ENCODE measurements at regions of chr9 and their contacts with region 1.

Region 1: GRCh38 chr9:34559624-34560452 is 29.7 kb downstream of the CNTFR start:
- DNase-seq: no peak
- H3K4me3 ChIP-seq: no peak overlapping the region
- H3K27ac ChIP-seq: no peak overlapping the region
- H3K4me1 ChIP-seq: peaks cover 7 to 24% (median 16%) of the 10 kb centered on the region in 4 experiments
- H3K27me3 ChIP-seq: no peaks in the 10 kb centered on the region; a peak in 3 of 7 replicates
- CTCF ChIP-seq: no peak
- EP300 ChIP-seq: no peak
- POLR2A ChIP-seq: no peak
- RAD21 ChIP-seq: no peak

Region 2: GRCh38 chr9:34417734-34418133 is 142.1 kb before region 1 on chr9:
- CTCF ChIA-PET with region 1: no interaction called
- POLR2A ChIA-PET with region 1: no interaction called
- DNase-seq: no peak
- H3K4me3 ChIP-seq: no peak overlapping the region
- H3K27ac ChIP-seq: no peak overlapping the region
- H3K4me1 ChIP-seq: no peaks in the 10 kb centered on the region
- H3K27me3 ChIP-seq: no peaks in the 10 kb centered on the region; a peak in 1 of 7 replicates
- CTCF ChIP-seq: no peak
- EP300 ChIP-seq: no peak
- POLR2A ChIP-seq: no peak
- RAD21 ChIP-seq: no peak

Region 3: GRCh38 chr9:34430843-34431437 is 128.9 kb before region 1 on chr9:
- CTCF ChIA-PET with region 1: interaction called, 10 read pairs
- POLR2A ChIA-PET with region 1: no interaction called
- DNase-seq: peak; percentile 34 to 69
- H3K4me3 ChIP-seq: no peak overlapping the region
- H3K27ac ChIP-seq: no peak overlapping the region
- H3K4me1 ChIP-seq: no peaks in the 10 kb centered on the region
- H3K27me3 ChIP-seq: no peaks in the 10 kb centered on the region
- CTCF ChIP-seq: no peak
- EP300 ChIP-seq: no peak
- POLR2A ChIP-seq: no peak
- RAD21 ChIP-seq: peak in 1 of 2 experiments; percentile 8; a peak in 1 of 4 replicates

Region 4: GRCh38 chr9:34513567-34514214 is 46.1 kb before region 1 on chr9:
- CTCF ChIA-PET with region 1: interaction called, 11 read pairs
- POLR2A ChIA-PET with region 1: no interaction called
- DNase-seq: peak in 1 of 2 experiments; percentile 63
- H3K4me3 ChIP-seq: peak overlapping the region in 1 of 4 experiments; percentile 37; a peak in 1 of 8 replicates
- H3K27ac ChIP-seq: 0 out of 2 replicates have a peak overlapping the region, but pooled peaks have one; percentile 66
- H3K4me1 ChIP-seq: peaks cover 16 to 33% (median 20%) of the 10 kb centered on the region in 4 experiments
- H3K27me3 ChIP-seq: no peaks in the 10 kb centered on the region; a peak in 1 of 7 replicates
- CTCF ChIP-seq: no peak
- EP300 ChIP-seq: no peak
- POLR2A ChIP-seq: no peak
- RAD21 ChIP-seq: no peak

Region 5: DNA sequence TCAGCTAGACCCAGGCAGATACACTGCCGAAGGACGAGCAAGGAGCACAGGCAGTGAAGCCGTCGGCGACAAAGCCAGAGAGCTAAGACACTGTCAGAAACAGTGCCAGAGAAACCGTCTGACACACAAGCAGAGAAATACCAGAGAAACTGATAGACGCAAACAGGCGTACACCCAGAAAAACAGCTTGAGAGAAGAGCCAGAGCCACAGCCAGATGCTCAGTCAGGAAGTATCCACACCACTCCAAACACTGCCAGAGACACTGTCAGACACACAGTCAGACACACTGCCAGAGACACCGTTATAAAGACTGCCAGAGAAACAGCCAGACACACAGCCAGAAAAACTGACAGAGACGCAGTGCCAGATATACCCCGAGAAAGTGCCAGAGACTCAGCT is 10.5 kb after region 1 on chr9:
- CTCF ChIA-PET with region 1: interaction called, 241 read pairs
- POLR2A ChIA-PET with region 1: interaction called, 5 read pairs
- DNase-seq: no peak
- H3K4me3 ChIP-seq: no peak overlapping the region
- H3K27ac ChIP-seq: no peak overlapping the region
- H3K4me1 ChIP-seq: peaks cover 9 to 44% (median 17%) of the 10 kb centered on the region in 4 experiments
- H3K27me3 ChIP-seq: peaks cover 0 to 10% (median 5%) of the 10 kb centered on the region in 4 experiments; a peak in 3 of 7 replicates
- CTCF ChIP-seq: no peak
- EP300 ChIP-seq: no peak
- POLR2A ChIP-seq: no peak
- RAD21 ChIP-seq: no peak

Region 6: GRCh38 chr9:34578241-34579103 is 18.6 kb after region 1 on chr9:
- CTCF ChIA-PET with region 1: interaction called, 241 read pairs
- POLR2A ChIA-PET with region 1: interaction called, 4 read pairs
- DNase-seq: peak in 1 of 2 experiments; percentile 74
- H3K4me3 ChIP-seq: peak overlapping the region; percentile 24 to 55 (median 44)
- H3K27ac ChIP-seq: no peak overlapping the region
- H3K4me1 ChIP-seq: peaks cover 12 to 45% (median 30%) of the 10 kb centered on the region in 4 experiments
- H3K27me3 ChIP-seq: peaks cover 21 to 81% (median 65%) of the 10 kb centered on the region in 4 experiments
- CTCF ChIP-seq: peak in 1 of 3 experiments; percentile 6; a peak in 1 of 4 replicates
- EP300 ChIP-seq: no peak
- POLR2A ChIP-seq: no peak
- RAD21 ChIP-seq: no peak

Region 7: GRCh38 chr9:34637356-34638137 is 77.7 kb after region 1 on chr9 and contains the start of gene SIGMAR1:
- CTCF ChIA-PET with region 1: interaction called, 28 read pairs
- POLR2A ChIA-PET with region 1: no interaction called
- DNase-seq: peak; percentile 63 to 96
- H3K4me3 ChIP-seq: peak within 1 kb of the TSS; percentile 71 to 78 (median 77)
- H3K27ac ChIP-seq: no peak within 1 kb of the TSS; the same call in 1 of the 2 replicates
- H3K4me1 ChIP-seq: peaks cover 2 to 11% (median 8%) of the 10 kb centered on the region in 4 experiments; a peak in 4 of 7 replicates
- H3K27me3 ChIP-seq: peaks cover 0 to 6% (median 3%) of the 10 kb centered on the region in 4 experiments; a peak in 2 of 7 replicates
- CTCF ChIP-seq: no peak
- EP300 ChIP-seq: peak in 1 of 2 experiments; percentile 98; a peak in 2 of 3 replicates
- POLR2A ChIP-seq: peak; percentile 49 to 61; a peak in 2 of 3 replicates
- RAD21 ChIP-seq: no peak
- total RNA-seq, gene SIGMAR1: 84.2 and 86.8 TPM in 2 replicates

Measured in H1 (cell line).